ENCODE measurements at regions of chr15 and their contacts with region 1.

Region 1: GRCh38 chr15:55279746-55280351 is 9.8 kb downstream of the RAB27A start:
- DNase-seq: peak; percentile 96
- ATAC-seq: peak; percentile 74
- H3K4me3 ChIP-seq: peak overlapping the region; percentile 11; the same call in 1 of the 2 replicates
- H3K27ac ChIP-seq: peak overlapping the region; percentile 84
- H3K4me1 ChIP-seq: peaks cover 48% of the 10 kb centered on the region
- H3K27me3 ChIP-seq: no peaks in the 10 kb centered on the region
- CTCF ChIP-seq: no peak
- EP300 ChIP-seq: peak; percentile 56 to 62; a peak in 2 of 4 replicates
- POLR2A ChIP-seq: no peak
- RAD21 ChIP-seq: peak; percentile 26; the same call in 1 of the 2 replicates

Region 2: DNA sequence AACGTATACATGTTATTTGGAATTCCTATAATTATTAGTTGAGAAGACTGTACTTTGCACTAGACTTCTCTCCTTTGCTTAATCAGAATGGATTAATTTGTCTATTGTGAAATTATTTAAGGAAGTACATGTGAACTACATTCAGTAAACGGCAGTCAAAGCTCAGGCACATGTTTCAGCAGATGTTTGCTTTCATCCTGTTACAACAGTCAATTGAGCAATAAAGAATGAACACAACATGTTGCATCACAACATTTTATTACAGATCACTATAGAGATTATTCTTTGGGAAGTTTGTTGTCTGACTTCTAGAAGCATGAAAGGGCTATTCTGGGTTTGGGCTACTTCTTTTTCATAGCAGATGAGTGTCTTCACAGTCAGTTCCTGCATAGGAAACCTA is 29.5 kb before region 1 on chr15:
- CTCF ChIA-PET with region 1: no interaction called
- POLR2A ChIA-PET with region 1: interaction called, 4 read pairs
- RAD21 ChIA-PET with region 1: interaction called, 16 read pairs
- SMC1A ChIA-PET with region 1: interaction called, 38 read pairs
- in situ Hi-C with region 1: no loop called
- intact Hi-C with region 1: no loop called
- DNase-seq: no peak
- ATAC-seq: no peak
- H3K4me3 ChIP-seq: no peak overlapping the region
- H3K27ac ChIP-seq: no peak overlapping the region
- H3K4me1 ChIP-seq: peaks cover 4% of the 10 kb centered on the region
- H3K27me3 ChIP-seq: no peaks in the 10 kb centered on the region
- CTCF ChIP-seq: no peak
- EP300 ChIP-seq: no peak
- POLR2A ChIP-seq: no peak
- RAD21 ChIP-seq: no peak

Region 3: GRCh38 chr15:55255714-55256113 is 24.1 kb before region 1 on chr15:
- CTCF ChIA-PET with region 1: no interaction called
- POLR2A ChIA-PET with region 1: interaction called, 5 read pairs
- RAD21 ChIA-PET with region 1: interaction called, 16 read pairs
- SMC1A ChIA-PET with region 1: interaction called, 38 read pairs
- in situ Hi-C with region 1: no loop called
- intact Hi-C with region 1: no loop called
- DNase-seq: no peak
- ATAC-seq: peak; percentile 75
- H3K4me3 ChIP-seq: peak overlapping the region; percentile 4; the same call in 1 of the 2 replicates
- H3K27ac ChIP-seq: peak overlapping the region; percentile 4
- H3K4me1 ChIP-seq: peaks cover 24% of the 10 kb centered on the region
- H3K27me3 ChIP-seq: no peaks in the 10 kb centered on the region
- CTCF ChIP-seq: no peak
- EP300 ChIP-seq: no peak
- POLR2A ChIP-seq: no peak
- RAD21 ChIP-seq: no peak

Region 4: DNA sequence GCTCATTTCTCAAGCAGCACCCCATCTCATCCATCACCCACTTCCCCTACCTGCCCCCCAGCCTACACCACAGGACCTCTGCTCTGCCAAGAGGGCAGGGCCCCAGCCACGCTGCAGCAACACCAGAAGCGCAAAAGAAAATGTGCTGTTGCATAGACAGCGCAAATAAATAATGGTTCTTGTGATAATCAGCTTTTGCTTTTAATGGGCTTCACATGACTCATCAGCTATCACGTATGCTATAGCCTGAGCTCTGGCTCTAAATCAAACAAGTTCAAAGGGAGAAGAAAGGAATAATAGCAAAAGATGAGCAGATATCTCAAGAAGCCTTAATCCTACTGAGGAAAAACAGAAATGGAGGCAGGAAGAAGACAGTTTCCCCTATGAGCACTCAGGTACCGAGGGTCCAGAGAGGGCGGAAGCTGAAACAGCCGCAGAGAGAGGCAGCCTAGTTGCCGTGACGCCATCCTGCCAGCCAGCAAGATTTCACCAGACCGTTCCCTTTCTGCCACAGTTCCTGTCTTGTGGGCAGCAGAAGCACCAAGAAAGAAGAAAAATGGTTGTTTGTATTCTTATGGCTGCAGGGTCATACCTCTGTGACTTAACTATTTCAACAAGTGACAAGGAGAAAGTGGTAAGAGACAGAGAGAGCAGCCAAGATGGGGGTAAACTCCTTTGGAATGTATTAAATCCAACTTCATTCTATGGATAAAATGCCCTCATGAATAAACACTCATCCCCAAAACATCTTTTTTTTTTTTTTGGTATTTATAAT is 12.3 kb before region 1 on chr15:
- CTCF ChIA-PET with region 1: interaction called, 5 read pairs
- POLR2A ChIA-PET with region 1: interaction called, 10 read pairs
- RAD21 ChIA-PET with region 1: interaction called, 8 read pairs
- SMC1A ChIA-PET with region 1: interaction called, 13 read pairs
- in situ Hi-C with region 1: no loop called
- intact Hi-C with region 1: no loop called
- DNase-seq: no peak
- ATAC-seq: peak; percentile 98
- H3K4me3 ChIP-seq: no peak overlapping the region
- H3K27ac ChIP-seq: no peak overlapping the region
- H3K4me1 ChIP-seq: peaks cover 7% of the 10 kb centered on the region
- H3K27me3 ChIP-seq: no peaks in the 10 kb centered on the region
- CTCF ChIP-seq: no peak
- EP300 ChIP-seq: no peak
- POLR2A ChIP-seq: no peak
- RAD21 ChIP-seq: no peak

Region 5: GRCh38 chr15:55290528-55291057 is 10.7 kb after region 1 on chr15:
- CTCF ChIA-PET with region 1: interaction called, 7 read pairs
- POLR2A ChIA-PET with region 1: interaction called, 9 read pairs
- RAD21 ChIA-PET with region 1: interaction called, 10 read pairs
- SMC1A ChIA-PET with region 1: interaction called, 5 read pairs
- in situ Hi-C with region 1: no loop called
- intact Hi-C with region 1: no loop called
- DNase-seq: no peak
- ATAC-seq: peak; percentile 83
- H3K4me3 ChIP-seq: peak overlapping the region; percentile 89; the same call in 1 of the 2 replicates
- H3K27ac ChIP-seq: no peak overlapping the region; the same call in 1 of the 2 replicates
- H3K4me1 ChIP-seq: no peaks in the 10 kb centered on the region; the same call in 1 of the 2 replicates
- H3K27me3 ChIP-seq: no peaks in the 10 kb centered on the region
- CTCF ChIP-seq: peak; percentile 90 to 97 (median 92)
- EP300 ChIP-seq: no peak; a peak in 1 of 4 replicates
- POLR2A ChIP-seq: no peak
- RAD21 ChIP-seq: peak; percentile 96

Region 6: GRCh38 chr15:55407949-55408791 is 128.3 kb after region 1 on chr15 and contains the starts of genes CCPG1 and PIERCE2:
- CTCF ChIA-PET with region 1: no interaction called
- POLR2A ChIA-PET with region 1: interaction called, 3 read pairs
- RAD21 ChIA-PET with region 1: interaction called, 3 read pairs
- SMC1A ChIA-PET with region 1: no interaction called
- in situ Hi-C with region 1: no loop called
- intact Hi-C with region 1: loop called (anchors 5 kb)
- DNase-seq: peak; percentile 72
- ATAC-seq: peak; percentile 92
- H3K4me3 ChIP-seq: peak within 1 kb of the TSS; percentile 78
- H3K27ac ChIP-seq: peak within 1 kb of the TSS; percentile 55
- H3K4me1 ChIP-seq: peaks cover 22% of the 10 kb centered on the region
- H3K27me3 ChIP-seq: no peaks in the 10 kb centered on the region
- CTCF ChIP-seq: peak; percentile 58 to 73 (median 64)
- EP300 ChIP-seq: peak in 1 of 2 experiments; percentile 60; a peak in 1 of 4 replicates
- POLR2A ChIP-seq: peak; percentile 86
- RAD21 ChIP-seq: no peak
- polyA plus RNA-seq, gene CCPG1: 6.6 to 7.5 TPM
- polyA plus RNA-seq, gene PIERCE2: 0.93 to 1.3 TPM

Measured in GM12878 (cell line).